Calu3 (cell line): ENCODE measurements at regions of chr9 and their contacts with region 1.

Region 1: DNA sequence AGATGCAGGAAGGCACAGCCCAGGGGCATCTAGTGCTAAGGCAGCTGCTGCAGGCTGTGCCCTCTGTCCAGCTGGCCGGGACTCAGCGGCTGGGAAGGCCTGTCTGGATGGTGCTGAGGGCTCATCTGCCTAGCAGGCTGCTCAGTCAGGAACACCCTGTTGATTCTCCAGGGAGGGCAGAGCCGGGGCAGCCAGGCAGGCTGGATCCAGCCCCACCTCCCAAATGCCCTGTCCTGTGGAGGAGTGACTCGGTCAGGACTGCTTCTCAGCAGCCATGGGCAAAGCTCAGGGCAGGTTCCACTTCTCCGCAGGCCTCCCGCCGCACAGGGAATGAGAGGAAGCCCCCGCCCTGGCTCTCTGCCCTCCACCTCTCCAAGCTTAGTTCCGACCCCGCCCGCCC is 7.8 kb upstream of the LCN9 start:
- DNase-seq: no peak
- H3K4me3 Mint-ChIP-seq: no peak overlapping the region
- H3K27ac Mint-ChIP-seq: no peak overlapping the region
- H3K4me1 Mint-ChIP-seq: no peaks in the 10 kb centered on the region
- H3K27me3 Mint-ChIP-seq: peaks cover 29% of the 10 kb centered on the region
- CTCF ChIP-seq: no peak

Region 2: DNA sequence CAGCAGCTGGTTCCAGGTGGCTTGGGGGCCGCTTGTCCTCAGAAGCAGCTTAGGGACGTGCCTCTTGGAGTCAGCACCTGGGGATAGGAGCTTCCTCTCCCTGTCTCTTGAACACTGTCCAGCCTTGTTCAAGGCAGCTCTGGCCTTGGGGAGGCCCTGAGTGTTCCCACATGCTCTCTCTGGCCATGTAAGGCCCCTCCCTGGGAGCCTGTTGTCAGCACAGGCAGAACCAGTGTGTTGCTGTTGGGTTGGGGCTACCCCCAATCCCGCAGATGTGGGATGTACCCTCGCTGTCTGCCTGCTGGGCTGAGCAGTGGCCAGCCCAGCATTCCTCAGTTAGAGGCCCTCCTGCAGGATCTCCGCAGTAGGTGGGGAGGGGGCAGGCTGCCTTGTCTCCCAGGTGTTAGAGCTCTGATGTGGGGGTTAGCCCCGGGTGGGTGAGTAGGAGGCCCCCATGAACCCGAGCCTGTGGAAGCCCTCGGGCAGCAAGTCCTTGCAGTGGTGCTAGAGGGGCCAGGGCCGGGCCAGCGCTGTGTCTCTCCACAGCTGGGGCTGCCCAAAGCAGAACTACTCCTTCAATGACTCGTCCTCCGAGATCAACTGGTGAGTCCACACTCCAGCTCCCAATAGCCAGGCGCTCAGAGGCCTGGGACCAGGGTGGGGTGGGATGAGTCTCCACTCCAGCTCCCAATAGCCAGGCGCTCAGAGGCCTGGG is 98.2 kb after region 1 on chr9:
- CTCF ChIA-PET with region 1: interaction called, 10 read pairs
- intact Hi-C with region 1: no loop called
- DNase-seq: no peak
- H3K4me3 Mint-ChIP-seq: no peak overlapping the region
- H3K27ac Mint-ChIP-seq: no peak overlapping the region
- H3K4me1 Mint-ChIP-seq: no peaks in the 10 kb centered on the region
- H3K27me3 Mint-ChIP-seq: peaks cover 63% of the 10 kb centered on the region
- CTCF ChIP-seq: no peak